Left colon (tissue), 2 donors: ENCODE measurements at regions of chr5 and their contacts with region 1.

Region 1: GRCh38 chr5:150461231-150461630 is 11.7 kb upstream of the RPS14 start:
- DNase-seq: peak; percentile 41 to 47
- ATAC-seq: no peak

Region 2: GRCh38 chr5:150527038-150527437 is 65.8 kb after region 1 on chr5:
- intact Hi-C with region 1: loop called in 1 of 2 experiments (anchors 5 kb)
- DNase-seq: no peak
- ATAC-seq: no peak

Region 3: GRCh38 chr5:150544611-150545219 is 83.5 kb after region 1 on chr5:
- intact Hi-C with region 1: loop called in 1 of 2 experiments (anchors 10 kb)
- DNase-seq: peak; percentile 74 to 90
- ATAC-seq: peak; percentile 48

Region 4: DNA sequence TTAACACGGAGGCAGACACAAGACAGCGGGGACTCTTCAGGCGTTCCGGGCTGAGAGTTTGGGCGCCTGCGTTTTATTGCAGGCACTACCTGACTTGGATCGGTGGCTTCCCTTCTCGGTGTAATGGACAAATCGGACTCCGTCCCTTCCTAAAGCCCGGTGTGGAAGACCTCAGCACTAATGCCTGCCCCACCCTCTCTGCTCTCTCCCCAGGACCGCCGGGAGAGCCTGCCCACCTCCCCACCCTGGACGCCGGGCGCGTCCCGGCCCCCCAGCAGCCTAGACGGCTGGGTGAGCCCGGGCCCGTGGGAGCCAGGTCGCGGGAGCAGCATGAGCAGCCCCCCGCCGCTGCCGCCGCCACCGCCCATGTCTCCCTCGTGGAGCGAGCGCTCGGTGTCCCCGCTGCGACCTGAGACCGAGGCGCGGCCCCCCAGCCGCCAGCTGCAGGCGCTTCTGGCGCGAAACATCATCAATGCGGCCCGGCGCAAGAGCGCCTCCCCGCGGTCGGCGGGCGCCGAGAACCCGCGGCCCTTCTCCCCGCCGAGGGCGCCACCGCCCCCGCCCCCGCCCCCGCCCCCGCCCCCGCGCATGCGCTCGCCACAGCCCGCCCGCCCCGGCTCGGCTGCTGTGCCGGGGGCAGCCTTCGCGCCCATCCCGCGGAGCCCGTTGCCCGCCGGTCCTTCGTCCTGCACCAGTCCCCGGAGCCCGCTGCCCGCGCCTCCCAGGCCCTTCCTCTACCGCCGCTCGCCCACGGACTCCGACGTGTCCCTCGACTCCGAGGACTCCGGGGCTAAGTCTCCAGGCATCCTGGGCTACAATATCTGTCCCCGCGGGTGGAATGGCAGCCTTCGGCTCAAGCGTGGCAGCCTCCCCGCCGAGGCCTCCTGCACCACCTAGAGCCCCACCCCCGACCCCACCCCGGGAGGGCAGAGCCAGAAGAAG is 195.2 kb after region 1 on chr5:
- intact Hi-C with region 1: loop called in 1 of 2 experiments (anchors 10 kb)
- DNase-seq: peak; percentile 47 to 78
- ATAC-seq: peak; percentile 75